ENCODE measurements at regions of chr18 and their contacts with region 1.

Region 1: GRCh38 chr18:25351777-25352628 is at the start of gene ZNF521:
- DNase-seq: peak; percentile 88
- ATAC-seq: peak; percentile 83 to 87
- total RNA-seq, gene ZNF521: 29.4 to 34.4 TPM

Region 2: DNA sequence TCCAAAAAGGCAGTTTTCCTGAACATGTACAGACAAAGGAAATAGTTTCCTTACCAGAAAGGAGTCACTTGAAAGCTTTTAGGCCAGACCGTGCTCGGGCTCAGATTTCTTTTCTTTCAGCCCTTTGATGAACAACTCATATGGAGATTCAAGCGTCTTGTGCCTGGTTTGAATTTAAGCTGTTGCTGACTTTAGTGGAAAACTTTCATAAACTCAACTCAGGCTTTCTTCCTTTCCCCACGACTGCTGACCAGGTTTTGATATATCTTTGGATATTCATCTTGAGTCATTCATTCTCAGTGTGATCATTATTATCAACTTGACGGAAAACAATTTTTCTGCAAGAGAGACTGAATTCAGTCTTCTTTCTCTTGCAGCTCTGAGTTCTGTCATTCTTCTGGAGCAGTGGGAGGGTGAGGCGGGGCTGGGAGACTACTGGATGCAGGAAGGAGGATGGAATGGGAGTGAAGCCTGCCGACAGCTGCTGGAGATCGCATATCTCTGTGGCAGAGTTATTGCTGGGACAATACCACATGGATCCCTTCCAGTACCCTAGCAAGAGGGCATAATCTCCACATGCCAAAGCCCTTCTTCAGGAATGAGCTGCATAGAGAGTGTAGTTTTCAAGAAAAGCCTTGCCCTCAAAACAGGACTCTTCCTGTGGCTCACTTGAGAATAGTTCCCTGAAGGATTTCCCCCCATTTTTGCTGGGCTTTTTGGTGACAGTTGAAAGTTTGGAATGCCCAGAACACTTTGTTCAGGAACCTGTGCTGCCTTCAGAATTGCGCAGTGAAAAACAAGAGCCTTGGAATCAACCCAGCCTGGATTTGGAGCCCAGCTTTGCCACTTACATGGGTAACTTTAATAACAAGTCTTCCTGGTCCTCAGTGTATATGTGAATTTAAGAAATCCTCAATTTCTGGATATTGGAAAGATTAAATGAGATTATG is 364.4 kb before region 1 on chr18:
- intact Hi-C with region 1: loop called in 1 of 2 experiments (anchors 5 kb)
- DNase-seq: peak; percentile 51
- ATAC-seq: peak; percentile 65 to 83

Region 3: GRCh38 chr18:25230658-25231326 is 121.2 kb before region 1 on chr18:
- intact Hi-C with region 1: loop called in 1 of 2 experiments (anchors 5 kb)
- DNase-seq: peak; percentile 84
- ATAC-seq: peak; percentile 87 to 91

Region 4: DNA sequence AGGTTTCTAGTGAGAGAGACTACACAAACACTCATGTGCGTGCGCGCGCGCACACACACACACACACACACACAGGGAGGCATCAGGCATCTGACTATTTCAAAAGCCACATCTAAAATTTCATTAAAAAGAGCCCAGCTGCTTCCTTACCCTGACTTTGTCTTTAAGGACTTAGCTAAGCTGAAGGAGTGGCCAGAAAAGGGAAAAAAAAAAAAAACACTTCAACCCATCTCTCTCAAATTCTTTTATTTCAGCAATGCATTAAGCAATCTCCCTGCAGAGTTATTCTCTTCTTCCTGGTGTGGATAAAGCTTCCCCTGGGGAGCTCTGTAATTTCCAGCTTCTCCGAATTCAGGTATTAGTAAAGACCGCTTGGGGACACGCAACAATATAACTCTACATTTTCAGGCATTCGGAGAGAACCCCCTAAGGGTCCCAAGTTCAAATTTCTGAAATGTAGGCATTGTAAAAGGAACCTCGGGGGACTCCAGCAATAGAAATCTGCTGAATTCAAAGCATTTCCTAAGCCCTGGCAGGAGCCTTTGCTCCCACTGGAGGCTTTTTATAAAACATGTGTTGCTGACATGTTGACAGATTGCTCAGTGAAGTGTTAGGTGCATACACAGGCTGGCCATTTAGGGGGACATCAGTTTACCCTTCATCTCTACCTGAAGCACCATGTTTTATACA is 67.0 kb before region 1 on chr18:
- intact Hi-C with region 1: loop called in 1 of 2 experiments (anchors 2 kb)
- DNase-seq: peak; percentile 31
- ATAC-seq: peak; percentile 75 to 83

Region 5: GRCh38 chr18:25467226-25467987 is 115.4 kb after region 1 on chr18:
- intact Hi-C with region 1: loop called in 1 of 2 experiments (anchors 10 kb)
- DNase-seq: peak; percentile 76
- ATAC-seq: peak; percentile 97 to 98

Region 6: DNA sequence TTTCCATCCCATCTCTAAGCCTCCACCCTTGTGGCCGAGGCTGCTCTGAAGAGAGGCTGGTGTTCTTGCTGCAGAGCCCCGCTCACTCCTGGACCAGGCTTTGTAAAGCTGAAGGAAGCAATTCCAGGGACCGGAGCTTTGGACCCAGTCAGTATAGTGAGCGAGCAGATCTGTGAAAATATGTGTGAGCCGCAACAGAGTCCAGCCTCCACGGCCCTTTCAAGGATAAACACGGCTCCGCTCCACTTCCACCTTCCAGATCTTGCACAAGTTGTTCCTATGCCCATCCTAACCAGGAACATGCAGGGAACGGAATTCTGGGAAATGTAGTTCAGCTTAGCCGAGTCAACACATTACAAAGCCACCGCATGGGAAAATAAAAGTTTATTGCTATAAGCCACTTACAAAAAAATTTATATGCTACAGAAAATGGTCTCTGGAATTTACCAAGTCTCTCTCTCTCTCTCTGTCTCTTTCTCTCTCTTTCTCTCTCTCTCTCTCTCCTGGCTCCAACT is 151.6 kb after region 1 on chr18:
- intact Hi-C with region 1: loop called in 1 of 2 experiments (anchors 5 kb)
- DNase-seq: peak; percentile 69
- ATAC-seq: peak; percentile 97 to 99

Region 7: DNA sequence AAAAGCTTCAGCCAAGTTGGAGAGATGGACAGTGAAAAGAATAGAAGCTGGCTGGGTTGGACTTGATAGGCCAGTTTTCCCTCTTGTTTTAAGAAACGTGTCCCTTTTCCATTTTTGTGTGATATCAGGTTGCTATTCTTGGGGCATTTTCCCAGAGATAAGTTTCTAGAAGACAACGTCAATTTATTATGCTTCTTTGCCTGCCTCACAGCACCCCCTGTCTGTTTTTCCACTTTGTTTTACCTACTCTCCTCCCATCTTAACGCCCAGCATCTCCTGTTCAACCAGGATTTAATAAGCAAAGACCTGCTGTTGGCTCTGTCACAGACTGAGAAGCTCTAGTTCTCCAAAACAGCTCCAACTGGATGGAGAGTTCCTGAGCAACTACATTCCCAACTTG is 317.7 kb after region 1 on chr18:
- intact Hi-C with region 1: loop called in 1 of 2 experiments (anchors 10 kb)
- DNase-seq: no peak
- ATAC-seq: no peak